Panc1 (cell line): ENCODE measurements at regions of chr3 and their contacts with region 1.

Region 1: DNA sequence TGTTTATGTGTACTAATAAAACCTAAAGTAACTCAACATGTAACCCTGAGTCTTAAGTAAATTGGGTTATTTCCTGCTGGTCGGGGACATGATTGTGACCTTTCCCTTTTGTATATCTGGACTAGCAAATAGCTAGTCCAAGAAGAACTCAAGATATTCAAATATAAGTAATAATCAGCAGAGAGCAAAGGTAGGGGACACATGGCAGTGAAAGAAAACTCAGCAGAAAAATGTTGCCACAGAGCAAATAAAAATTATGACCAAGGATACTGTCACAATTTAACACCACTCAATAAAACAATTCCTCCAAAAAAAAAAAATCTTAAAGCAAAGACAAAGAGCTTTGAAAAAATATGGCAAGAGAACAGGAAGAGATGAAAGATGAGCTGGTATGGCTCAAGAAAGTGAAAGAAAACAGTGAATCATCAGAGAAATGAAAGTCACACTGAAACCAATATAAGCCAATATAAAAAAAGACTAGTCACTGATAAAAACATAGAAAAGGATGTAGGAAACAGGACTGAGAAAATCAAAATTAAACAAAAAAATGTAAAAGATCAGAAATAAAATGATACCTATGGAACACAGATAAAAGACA is 43.4 kb downstream of the HLTF start:
- DNase-seq: no peak
- ATAC-seq: no peak
- H3K4me3 ChIP-seq: no peak overlapping the region
- H3K27ac ChIP-seq: no peak overlapping the region
- H3K4me1 ChIP-seq: no peaks in the 10 kb centered on the region
- H3K27me3 ChIP-seq: no peaks in the 10 kb centered on the region
- CTCF ChIP-seq: no peak

Region 2: GRCh38 chr3:148718982-148719862 is 323.7 kb before region 1 on chr3:
- CTCF ChIA-PET with region 1: interaction called, 10 read pairs
- POLR2A ChIA-PET with region 1: no interaction called
- in situ Hi-C with region 1: no loop called
- intact Hi-C with region 1: no loop called
- DNase-seq: no peak
- ATAC-seq: no peak
- H3K4me3 ChIP-seq: no peak overlapping the region
- H3K27ac ChIP-seq: no peak overlapping the region
- H3K4me1 ChIP-seq: no peaks in the 10 kb centered on the region
- H3K27me3 ChIP-seq: peaks cover 2% of the 10 kb centered on the region; the same call in 1 of the 2 replicates
- CTCF ChIP-seq: peak; percentile 67; the same call in 1 of the 2 replicates